Activated B cell treated with CpG ODN at 0.5 μM for 24 hours (primary cell): ENCODE measurements at regions of chr1 and their contacts with region 1.

Region 1: DNA sequence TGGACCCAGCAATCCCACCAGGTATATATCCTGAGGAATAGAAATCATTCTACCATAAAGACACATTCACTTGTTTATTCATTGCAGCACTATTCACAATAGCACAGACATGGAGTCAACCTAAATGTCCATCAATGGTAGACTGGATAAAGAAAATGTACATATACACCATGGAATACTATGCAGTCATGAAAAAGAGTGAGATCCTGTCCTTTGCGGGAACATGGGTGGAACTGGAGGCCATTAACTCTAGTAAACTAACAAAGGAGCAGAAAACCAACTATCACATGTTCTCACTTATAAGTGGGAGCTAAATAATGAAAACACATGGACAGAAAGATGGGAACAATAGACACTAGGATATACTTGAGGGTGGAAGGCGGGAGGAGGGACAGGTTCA is 36.1 kb upstream of the PRKACB start:
- DNase-seq: no peak
- ATAC-seq: no peak
- H3K4me3 Mint-ChIP-seq: no peak overlapping the region
- H3K27ac Mint-ChIP-seq: no peak overlapping the region
- H3K4me1 Mint-ChIP-seq: no peaks in the 10 kb centered on the region
- H3K27me3 Mint-ChIP-seq: no peaks in the 10 kb centered on the region
- CTCF ChIP-seq: no peak

Region 2: GRCh38 chr1:84090447-84091245 is 17.3 kb before region 1 on chr1:
- CTCF ChIA-PET with region 1: no interaction called
- POLR2A ChIA-PET with region 1: no interaction called
- intact Hi-C with region 1: loop called (anchors 2 kb)
- DNase-seq: no peak
- ATAC-seq: peak; percentile 31
- H3K4me3 Mint-ChIP-seq: peak overlapping the region; percentile 53
- H3K27ac Mint-ChIP-seq: peak overlapping the region; percentile 67
- H3K4me1 Mint-ChIP-seq: peaks cover 21% of the 10 kb centered on the region
- H3K27me3 Mint-ChIP-seq: no peaks in the 10 kb centered on the region
- CTCF ChIP-seq: no peak

Region 3: GRCh38 chr1:84174051-84174556 is 66.1 kb after region 1 on chr1:
- CTCF ChIA-PET with region 1: no interaction called
- POLR2A ChIA-PET with region 1: no interaction called
- intact Hi-C with region 1: no loop called
- DNase-seq: no peak
- ATAC-seq: no peak
- H3K4me3 Mint-ChIP-seq: no peak overlapping the region
- H3K27ac Mint-ChIP-seq: no peak overlapping the region
- H3K4me1 Mint-ChIP-seq: peaks cover 36% of the 10 kb centered on the region
- H3K27me3 Mint-ChIP-seq: no peaks in the 10 kb centered on the region
- CTCF ChIP-seq: no peak